Common myeloid progenitor, CD34-positive (primary cell): ENCODE measurements at regions of chr16 and their contacts with region 1.

Region 1: DNA sequence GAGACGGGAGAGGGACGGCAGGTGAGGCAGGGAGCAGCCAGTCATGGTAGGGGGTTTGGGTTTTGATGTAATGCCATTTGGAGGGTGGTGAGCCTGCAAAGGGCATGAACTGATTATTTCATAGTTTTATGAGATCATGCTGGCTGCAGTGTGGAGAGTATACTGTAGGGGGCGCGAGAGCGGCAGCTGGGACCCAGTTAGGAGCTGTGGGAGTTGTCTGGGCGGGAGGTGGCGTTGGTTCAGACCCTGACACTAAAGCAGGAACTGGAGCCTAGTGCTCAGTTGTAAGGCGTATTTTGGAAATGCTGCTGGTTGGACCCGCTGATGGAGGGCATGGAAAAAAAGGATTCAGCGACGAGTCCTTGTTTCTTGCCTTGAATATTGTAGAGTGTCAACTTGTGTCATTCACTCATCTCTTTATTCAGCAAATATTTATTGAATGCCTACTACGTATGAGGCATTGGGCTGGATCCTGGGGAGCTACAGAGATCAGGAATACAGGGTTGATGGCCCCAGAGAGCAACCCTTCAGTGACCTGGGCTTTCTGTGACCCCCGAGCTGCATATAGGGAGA is 23.7 kb upstream of the KDM8 start:
- DNase-seq: peak; percentile 87 to 95 (median 93)
- H3K4me3 ChIP-seq: peak overlapping the region in 1 of 7 experiments; percentile 17
- H3K27ac ChIP-seq: no peak overlapping the region
- H3K4me1 ChIP-seq: peaks cover 7 to 23% (median 23%) of the 10 kb centered on the region in 4 experiments
- H3K27me3 ChIP-seq: no peaks in the 10 kb centered on the region

Region 2: GRCh38 chr16:27164352-27164751 is 15.2 kb before region 1 on chr16:
- CTCF ChIA-PET with region 1: interaction called, 19 read pairs
- POLR2A ChIA-PET with region 1: no interaction called
- DNase-seq: no peak
- H3K4me3 ChIP-seq: no peak overlapping the region
- H3K27ac ChIP-seq: no peak overlapping the region
- H3K4me1 ChIP-seq: peaks cover 0 to 5% (median 0%) of the 10 kb centered on the region in 4 experiments
- H3K27me3 ChIP-seq: no peaks in the 10 kb centered on the region

Region 3: DNA sequence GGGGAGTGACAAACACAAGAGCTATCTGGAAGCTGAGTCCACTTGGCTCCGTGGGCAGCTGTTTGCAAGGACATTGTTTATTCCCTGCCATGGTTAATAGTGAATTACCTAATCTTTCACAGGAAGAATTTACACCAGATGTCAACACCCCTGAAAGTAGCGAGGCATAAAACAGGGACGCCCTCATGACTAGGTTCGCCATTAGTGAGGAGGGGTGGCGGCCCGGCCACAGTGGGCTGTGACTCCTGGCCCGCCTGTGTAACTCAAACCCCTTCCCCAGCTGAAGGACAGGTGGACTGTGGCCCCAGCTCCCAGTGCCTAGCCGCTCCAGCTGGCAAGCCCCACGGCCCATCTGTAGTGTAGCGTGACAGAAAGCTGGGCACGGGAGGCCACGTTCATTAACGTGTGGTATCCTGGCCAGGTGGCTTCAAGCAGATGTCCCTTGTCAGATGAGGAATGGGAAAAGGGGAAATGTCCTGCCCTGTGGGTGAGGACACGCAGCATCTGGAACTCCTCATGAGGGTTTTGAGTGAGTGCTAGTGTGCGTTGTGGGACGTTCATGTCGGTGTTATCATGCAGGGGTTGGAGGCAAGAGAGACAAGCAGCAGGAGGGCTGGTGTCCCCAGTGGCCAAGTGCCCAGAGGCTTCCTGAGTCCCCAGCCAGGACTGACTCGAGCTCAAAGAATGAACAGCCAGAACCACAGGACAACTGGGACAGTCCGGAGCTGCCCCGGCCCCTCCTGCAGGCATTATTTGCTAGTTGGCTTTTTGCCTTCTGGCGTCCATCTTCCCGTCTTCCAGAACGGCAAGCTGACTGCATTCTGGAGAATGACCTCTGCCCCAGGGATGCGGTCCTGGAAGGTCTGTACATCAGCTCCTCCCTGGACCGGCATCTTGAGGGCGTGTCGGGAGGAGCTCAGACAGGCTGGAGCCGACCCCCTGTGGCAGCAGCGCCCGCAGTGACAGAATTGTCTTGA is 43.0 kb after region 1 on chr16:
- CTCF ChIA-PET with region 1: interaction called, 21 read pairs
- POLR2A ChIA-PET with region 1: no interaction called
- DNase-seq: no peak
- H3K4me3 ChIP-seq: no peak overlapping the region
- H3K27ac ChIP-seq: no peak overlapping the region
- H3K4me1 ChIP-seq: peaks cover 0 to 16% (median 11%) of the 10 kb centered on the region in 4 experiments
- H3K27me3 ChIP-seq: no peaks in the 10 kb centered on the region

Region 4: GRCh38 chr16:27242868-27243590 is 63.4 kb after region 1 on chr16:
- CTCF ChIA-PET with region 1: interaction called, 11 read pairs
- POLR2A ChIA-PET with region 1: no interaction called
- DNase-seq: peak in 2 of 3 donors; percentile 82 to 85
- H3K4me3 ChIP-seq: peak overlapping the region in 6 of 7 experiments; percentile 30 to 76 (median 54)
- H3K27ac ChIP-seq: peak overlapping the region in 1 of 2 experiments; percentile 56
- H3K4me1 ChIP-seq: peaks cover 5 to 84% (median 69%) of the 10 kb centered on the region in 4 experiments
- H3K27me3 ChIP-seq: no peaks in the 10 kb centered on the region